ENCODE measurements at regions of chr2 and their contacts with region 1.

Region 1: DNA sequence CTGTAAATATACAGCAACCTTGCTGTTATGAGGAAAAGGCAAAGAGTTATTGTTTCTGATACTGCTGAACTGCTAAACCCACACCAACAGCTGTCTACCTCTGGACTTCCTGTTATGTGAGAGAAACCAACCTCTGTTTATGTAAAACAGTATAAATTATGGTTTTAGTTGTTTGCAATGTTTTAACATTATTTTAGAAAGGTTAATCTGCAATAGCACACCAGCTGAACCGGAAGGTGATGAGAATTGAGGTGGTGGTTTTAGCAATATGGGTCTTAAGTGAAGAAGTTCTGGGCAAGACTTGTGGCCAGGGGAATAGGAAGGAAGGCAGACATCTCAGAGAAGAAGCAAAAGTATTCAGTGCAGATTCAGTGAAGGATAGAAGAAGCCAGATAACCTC is 237.8 kb downstream of the PLCL1 start:
- DNase-seq: no peak
- H3K4me3 Mint-ChIP-seq: no peak overlapping the region
- H3K27ac Mint-ChIP-seq: no peak overlapping the region
- H3K4me1 Mint-ChIP-seq: peaks cover 19% of the 10 kb centered on the region
- H3K27me3 Mint-ChIP-seq: no peaks in the 10 kb centered on the region

Region 2: GRCh38 chr2:197108758-197109157 is 933.4 kb before region 1 on chr2:
- intact Hi-C with region 1: no loop called
- DNase-seq: no peak
- H3K4me3 Mint-ChIP-seq: no peak overlapping the region
- H3K27ac Mint-ChIP-seq: no peak overlapping the region
- H3K4me1 Mint-ChIP-seq: peaks cover 9% of the 10 kb centered on the region
- H3K27me3 Mint-ChIP-seq: no peaks in the 10 kb centered on the region

Region 3: DNA sequence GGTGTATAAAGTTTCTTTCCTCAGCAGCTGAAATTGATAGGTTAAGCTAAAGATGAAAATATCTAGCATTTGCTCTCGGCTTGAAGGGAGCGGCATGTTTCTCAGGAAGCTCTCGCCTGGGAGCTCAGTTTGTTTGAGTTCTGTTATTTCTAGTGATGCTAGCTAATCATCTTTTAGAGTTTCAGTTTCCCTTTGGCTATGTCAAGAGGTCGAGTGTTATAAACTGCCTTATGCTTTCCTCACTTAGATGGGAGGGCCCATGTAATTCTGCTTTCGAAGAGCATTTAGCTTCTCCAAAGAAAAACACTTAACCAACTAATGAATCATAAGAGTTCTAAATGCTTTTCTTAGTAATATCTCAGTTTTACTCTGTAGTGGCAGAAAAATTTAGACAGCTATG is 204.2 kb before region 1 on chr2:
- intact Hi-C with region 1: loop called (anchors 2 kb)
- DNase-seq: no peak
- H3K4me3 Mint-ChIP-seq: peak overlapping the region; percentile 53
- H3K27ac Mint-ChIP-seq: peak overlapping the region; percentile 68
- H3K4me1 Mint-ChIP-seq: peaks cover 44% of the 10 kb centered on the region
- H3K27me3 Mint-ChIP-seq: peaks cover 4% of the 10 kb centered on the region

Region 4: DNA sequence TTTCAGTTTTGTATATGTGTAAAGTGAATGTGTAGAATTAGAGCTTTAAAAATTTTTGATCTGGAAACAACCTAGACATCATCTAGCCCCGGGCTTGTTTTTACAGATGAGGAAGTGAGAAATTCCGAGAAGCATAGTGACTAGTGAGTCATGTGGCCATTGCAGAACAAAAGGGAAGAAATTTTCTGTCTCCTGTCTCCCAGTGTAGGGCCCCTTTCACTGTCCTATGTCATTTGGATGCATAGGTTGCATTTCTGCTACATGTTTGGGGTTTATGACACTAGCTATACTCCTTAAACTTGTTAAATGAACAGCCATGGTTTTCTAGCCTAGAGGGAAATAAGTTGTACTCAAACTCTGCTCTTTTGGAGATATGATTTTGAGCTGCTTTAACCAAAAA is 153.1 kb before region 1 on chr2:
- intact Hi-C with region 1: loop called (anchors 1 kb)
- DNase-seq: no peak
- H3K4me3 Mint-ChIP-seq: no peak overlapping the region
- H3K27ac Mint-ChIP-seq: peak overlapping the region; percentile 77
- H3K4me1 Mint-ChIP-seq: peaks cover 37% of the 10 kb centered on the region
- H3K27me3 Mint-ChIP-seq: no peaks in the 10 kb centered on the region

Region 5: DNA sequence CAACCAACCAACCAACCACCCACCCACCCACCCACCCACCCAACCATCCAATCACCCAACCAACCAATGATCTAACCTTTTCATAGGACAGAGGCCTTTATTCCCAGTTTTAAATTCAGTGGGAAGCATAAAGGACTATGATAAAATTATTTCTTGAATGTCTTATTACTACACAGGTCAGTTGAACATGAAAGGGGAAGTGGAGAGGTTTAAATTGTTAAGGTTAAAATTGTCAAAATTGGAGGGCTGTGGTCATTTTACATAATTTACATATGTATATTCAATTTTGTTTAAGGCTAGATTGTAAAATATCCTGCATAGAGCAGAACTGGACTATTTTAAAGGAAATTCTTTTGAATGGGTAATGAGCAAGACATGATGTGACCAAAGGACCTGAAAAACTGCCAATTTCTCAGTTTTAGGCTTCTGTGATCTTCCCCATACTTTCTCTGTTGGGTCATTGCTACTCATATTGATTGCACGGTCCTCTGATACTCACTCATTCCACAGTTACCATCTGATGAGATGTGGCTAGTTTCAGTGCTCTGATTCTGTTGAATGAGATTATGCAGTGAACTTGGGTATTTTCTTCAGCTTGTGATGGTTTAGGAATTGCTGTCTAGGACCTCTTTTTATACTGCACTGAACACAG is 110.4 kb before region 1 on chr2:
- intact Hi-C with region 1: loop called (anchors 2 kb)
- DNase-seq: no peak
- H3K4me3 Mint-ChIP-seq: no peak overlapping the region
- H3K27ac Mint-ChIP-seq: no peak overlapping the region
- H3K4me1 Mint-ChIP-seq: peaks cover 39% of the 10 kb centered on the region
- H3K27me3 Mint-ChIP-seq: peaks cover 6% of the 10 kb centered on the region

Region 6: GRCh38 chr2:197952540-197953202 is 89.5 kb before region 1 on chr2:
- intact Hi-C with region 1: loop called (anchors 1 kb)
- DNase-seq: no peak
- H3K4me3 Mint-ChIP-seq: no peak overlapping the region
- H3K27ac Mint-ChIP-seq: no peak overlapping the region
- H3K4me1 Mint-ChIP-seq: peaks cover 20% of the 10 kb centered on the region
- H3K27me3 Mint-ChIP-seq: peaks cover 7% of the 10 kb centered on the region

Region 7: GRCh38 chr2:198004921-198005829 is 37.0 kb before region 1 on chr2:
- intact Hi-C with region 1: loop called (anchors 1 kb)
- DNase-seq: no peak
- H3K4me3 Mint-ChIP-seq: peak overlapping the region; percentile 20
- H3K27ac Mint-ChIP-seq: peak overlapping the region; percentile 79
- H3K4me1 Mint-ChIP-seq: peaks cover 49% of the 10 kb centered on the region
- H3K27me3 Mint-ChIP-seq: no peaks in the 10 kb centered on the region